Dorsolateral prefrontal cortex (tissue), 120 donors: ENCODE measurements at regions of chr17 and their contacts with region 1.

Region 1: DNA sequence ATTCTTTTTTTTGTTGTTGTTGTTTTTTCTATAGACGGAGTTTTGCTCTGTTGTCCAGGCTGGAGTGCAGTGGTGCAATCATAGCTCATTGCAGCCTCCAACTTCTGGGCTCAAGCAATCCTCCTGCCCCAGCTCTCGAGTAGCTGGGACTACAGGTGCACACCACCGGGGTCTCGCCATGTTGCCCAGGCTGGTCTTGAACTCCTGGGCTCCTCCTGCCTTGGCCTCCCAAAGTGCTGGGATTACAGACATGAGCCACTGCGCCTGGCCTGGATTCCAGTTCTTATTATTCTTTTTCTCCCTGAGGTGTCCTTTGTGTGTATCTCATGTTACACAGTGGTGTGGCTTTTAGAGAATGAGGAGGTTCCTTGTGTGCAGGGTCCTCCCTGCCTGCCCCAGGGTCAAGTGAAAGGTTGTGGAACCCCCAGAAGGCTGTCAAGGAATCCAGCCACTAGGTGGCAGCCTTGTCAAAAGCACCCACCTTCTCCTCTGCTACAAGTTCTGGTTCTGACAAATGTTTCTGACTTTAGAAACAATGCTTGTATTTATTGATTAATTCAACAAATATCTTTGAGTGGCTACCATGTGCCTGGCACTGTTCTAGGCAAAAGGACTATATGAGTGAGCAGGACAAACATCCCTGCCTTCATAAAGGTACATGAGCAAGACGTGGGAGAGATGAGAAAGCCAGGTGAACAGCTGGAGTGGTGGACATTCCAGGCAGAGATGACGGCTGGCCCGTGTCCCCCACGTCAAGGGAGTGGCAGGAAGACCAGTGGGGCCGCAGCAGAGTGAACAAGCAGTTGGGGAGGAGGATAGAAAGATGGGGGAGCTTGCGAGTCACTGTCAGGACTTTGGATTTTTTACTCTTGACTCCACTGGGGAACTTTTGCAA is 112.4 kb downstream of the SPECC1 start:
- DNase-seq: peak; percentile 43 to 89 (median 78)
- H3K4me3 ChIP-seq: peak overlapping the region in 51 of 59 donors; percentile 5 to 55 (median 35)
- H3K27ac ChIP-seq: peak overlapping the region in 58 of 59 donors; percentile 49 to 93 (median 86)
- H3K27me3 ChIP-seq: no peaks in the 10 kb centered on the region
- CTCF ChIP-seq: peak; percentile 85 to 98 (median 93)

Region 2: GRCh38 chr17:19744922-19745757 is 376.5 kb before region 1 on chr17:
- intact Hi-C with region 1: no loop called
- DNase-seq: peak; percentile 90 to 97 (median 94)
- H3K4me3 ChIP-seq: peak overlapping the region; percentile 45 to 76 (median 61)
- H3K27ac ChIP-seq: peak overlapping the region in 51 of 59 donors; percentile 7 to 84 (median 62)
- H3K27me3 ChIP-seq: no peaks in the 10 kb centered on the region
- CTCF ChIP-seq: peak; percentile 73 to 97 (median 92)

Region 3: DNA sequence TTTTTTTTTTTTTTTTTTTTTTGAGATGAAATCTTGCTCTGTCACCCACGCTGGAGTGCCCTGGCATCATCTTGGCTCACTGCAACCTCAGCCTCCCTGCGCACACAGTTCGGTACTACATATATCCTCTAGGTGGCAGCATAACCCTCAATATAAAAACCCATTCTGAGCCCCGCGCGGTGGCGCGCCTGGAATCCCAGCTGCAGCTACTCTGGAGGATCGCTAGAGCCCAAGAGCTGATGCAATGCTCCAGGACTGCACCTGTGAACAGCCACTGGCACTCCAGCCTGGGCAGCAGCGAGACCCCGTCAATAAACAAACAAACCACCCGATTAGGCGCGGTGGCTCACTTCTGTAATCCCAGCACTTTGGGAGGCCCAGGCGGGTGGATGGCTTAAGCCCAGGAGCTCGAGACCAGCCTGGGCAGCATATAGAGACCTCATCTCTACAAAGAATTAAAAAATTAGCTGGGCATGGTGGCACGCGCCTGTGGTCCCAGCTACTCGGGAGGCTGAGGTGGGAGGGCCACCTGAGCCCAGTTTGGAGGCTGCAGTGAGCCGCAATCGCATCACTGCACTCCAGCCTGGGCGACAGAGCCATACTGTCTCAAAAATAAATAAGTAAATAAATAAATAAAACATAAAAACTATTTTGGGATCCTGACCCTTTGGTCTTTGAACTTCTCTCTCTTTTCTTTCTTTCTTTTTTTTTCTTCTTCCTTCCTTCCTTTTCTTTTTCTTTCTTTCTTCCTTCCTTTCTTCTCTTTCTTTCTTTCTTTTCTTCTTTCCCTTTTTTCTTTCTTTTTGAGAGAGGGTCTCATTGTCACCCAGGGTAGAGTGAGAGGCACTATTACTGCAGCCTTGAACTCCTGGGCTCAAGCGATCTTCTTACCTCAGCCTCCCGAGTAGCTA is 128.5 kb before region 1 on chr17:
- intact Hi-C with region 1: loop called (anchors 1 to 2 kb)
- DNase-seq: peak; percentile 83 to 94 (median 90)
- H3K4me3 ChIP-seq: peak overlapping the region in 58 of 59 donors; percentile 23 to 65 (median 47)
- H3K27ac ChIP-seq: peak overlapping the region in 51 of 59 donors; percentile 2 to 86 (median 74)
- H3K27me3 ChIP-seq: no peaks in the 10 kb centered on the region
- CTCF ChIP-seq: peak; percentile 79 to 97 (median 91)

Region 4: GRCh38 chr17:20009302-20010098 is 112.1 kb before region 1 on chr17 and contains the start of gene SPECC1:
- intact Hi-C with region 1: loop called (anchors 2 to 5 kb)
- DNase-seq: peak in 8 of 10 donors; percentile 69 to 93 (median 82)
- H3K4me3 ChIP-seq: peak within 1 kb of the TSS; percentile 65 to 99 (median 88)
- H3K27ac ChIP-seq: peak within 1 kb of the TSS; percentile 74 to 98 (median 95)
- H3K27me3 ChIP-seq: no peaks in the 10 kb centered on the region
- CTCF ChIP-seq: peak in 48 of 56 donors; percentile 3 to 100 (median 96)
- total RNA-seq, gene SPECC1: 140 to 321 (median 197) TPM

Region 5: DNA sequence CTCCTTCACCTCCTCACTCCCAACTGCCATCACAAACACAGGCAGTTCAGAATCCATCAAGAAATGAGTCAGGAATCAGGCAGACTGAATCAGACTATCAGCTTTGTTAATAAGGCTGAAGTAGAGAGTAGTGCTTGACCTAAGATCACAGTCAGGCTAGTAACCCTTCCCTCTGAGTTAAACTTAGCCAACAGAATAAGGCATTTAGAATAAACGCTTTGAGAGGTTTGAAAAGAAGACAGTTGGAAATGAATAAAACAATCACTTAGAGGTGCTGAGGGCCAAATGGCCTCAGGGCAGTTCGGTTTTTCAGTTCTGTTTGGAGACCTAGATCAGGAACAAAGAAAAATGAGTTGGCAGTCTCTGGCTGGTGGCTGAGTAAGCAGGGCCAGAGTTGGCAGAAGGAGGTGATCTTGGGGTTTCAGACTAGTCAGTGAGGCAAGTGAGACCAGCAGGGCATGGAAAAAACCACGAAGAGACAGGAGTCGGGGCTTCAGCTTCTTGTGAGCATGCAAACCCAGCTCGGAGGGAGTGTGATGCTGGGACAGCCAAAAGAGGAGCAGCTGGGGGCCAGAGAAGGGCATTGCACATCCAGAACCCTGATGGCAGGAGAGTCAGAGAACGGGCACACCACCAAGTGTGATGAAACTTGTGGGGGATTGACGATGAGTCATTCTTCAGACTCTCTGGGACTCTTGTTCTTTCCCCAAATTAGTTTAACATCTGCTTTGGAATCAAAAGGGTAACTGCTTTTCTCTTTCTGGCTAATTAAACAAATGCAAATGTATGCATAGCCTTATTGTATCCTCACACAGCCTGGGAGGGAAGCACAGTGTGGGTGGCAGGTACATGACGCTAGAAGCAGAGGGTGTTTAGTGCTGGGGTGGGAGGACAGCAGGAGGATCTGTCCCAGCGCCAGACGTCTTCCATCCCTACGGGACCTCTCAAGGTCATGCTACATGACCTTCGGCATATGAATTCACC is 57.6 kb before region 1 on chr17:
- intact Hi-C with region 1: no loop called
- DNase-seq: peak in 9 of 10 donors; percentile 43 to 89 (median 70)
- H3K4me3 ChIP-seq: peak overlapping the region in 31 of 59 donors; percentile 1 to 44 (median 22)
- H3K27ac ChIP-seq: peak overlapping the region; percentile 39 to 92 (median 82)
- H3K27me3 ChIP-seq: no peaks in the 10 kb centered on the region
- CTCF ChIP-seq: peak in 2 of 56 donors; percentile 6 to 17

Region 6: DNA sequence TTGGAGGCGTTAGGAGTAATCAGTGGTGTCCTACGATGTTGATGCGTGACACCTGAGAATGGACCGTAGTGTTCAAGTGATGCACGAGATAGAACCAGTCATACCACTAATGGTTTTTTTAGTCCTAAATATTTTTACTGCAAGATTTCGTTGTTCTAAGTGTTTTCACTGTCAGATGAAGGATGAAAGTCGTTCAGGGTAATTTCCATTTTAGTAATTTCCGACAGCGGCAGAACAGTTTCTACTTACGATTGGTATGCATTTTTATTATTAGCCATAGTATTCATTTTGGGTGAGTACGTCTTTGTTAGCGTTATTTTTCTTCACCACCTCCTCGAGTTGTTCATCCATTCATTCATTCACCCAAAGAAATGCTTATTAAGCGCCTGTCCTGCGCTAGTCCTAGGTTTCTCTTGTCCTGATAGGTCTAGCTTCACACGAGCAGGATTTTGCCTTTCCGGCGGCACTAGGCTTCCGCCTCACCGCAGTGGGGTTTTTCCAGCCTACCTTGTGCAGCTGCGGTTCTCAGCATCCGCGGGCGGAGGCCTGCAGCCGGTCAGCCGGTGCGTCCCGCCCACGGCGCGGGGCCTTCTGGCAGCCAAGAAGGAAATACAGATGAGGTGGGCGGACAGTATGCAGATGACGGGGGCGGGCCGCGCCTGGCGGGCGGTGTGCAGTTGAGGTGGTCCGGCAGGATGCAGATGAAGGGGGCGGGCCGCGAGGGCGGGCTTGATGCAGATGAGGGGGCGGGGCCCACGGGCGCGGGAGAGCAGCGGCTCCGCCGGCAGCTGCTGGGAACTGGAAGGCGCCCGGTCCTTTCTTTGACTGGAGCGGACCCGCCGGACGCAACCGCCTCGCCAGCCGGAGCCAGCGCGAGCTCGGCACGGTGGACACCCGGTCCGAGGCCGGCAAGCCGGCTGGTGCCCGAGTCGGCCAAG is 33.9 kb after region 1 on chr17:
- intact Hi-C with region 1: loop called in 1 of 2 experiments (anchors 2 kb)
- DNase-seq: peak; percentile 77 to 98 (median 96)
- H3K4me3 ChIP-seq: peak overlapping the region; percentile 63 to 92 (median 81)
- H3K27ac ChIP-seq: peak overlapping the region in 57 of 59 donors; percentile 6 to 91 (median 81)
- H3K27me3 ChIP-seq: no peaks in the 10 kb centered on the region
- CTCF ChIP-seq: peak in 22 of 56 donors; percentile 7 to 51 (median 36)

Region 7: GRCh38 chr17:20189302-20189701 is 67.7 kb after region 1 on chr17:
- intact Hi-C with region 1: loop called (anchors 2 to 5 kb)
- DNase-seq: peak; percentile 23 to 94 (median 91)
- H3K4me3 ChIP-seq: peak overlapping the region in 28 of 59 donors; percentile 0 to 45 (median 20)
- H3K27ac ChIP-seq: peak overlapping the region; percentile 84 to 99 (median 95)
- H3K27me3 ChIP-seq: no peaks in the 10 kb centered on the region
- CTCF ChIP-seq: peak in 9 of 56 donors; percentile 4 to 30 (median 12)

Region 8: GRCh38 chr17:20226814-20227482 is 105.3 kb after region 1 on chr17:
- intact Hi-C with region 1: loop called (anchors 1 kb)
- DNase-seq: peak; percentile 70 to 94 (median 92)
- H3K4me3 ChIP-seq: peak overlapping the region in 9 of 59 donors; percentile 2 to 35 (median 16)
- H3K27ac ChIP-seq: peak overlapping the region; percentile 2 to 95 (median 84)
- H3K27me3 ChIP-seq: no peaks in the 10 kb centered on the region
- CTCF ChIP-seq: peak; percentile 58 to 98 (median 93)

Region 9: DNA sequence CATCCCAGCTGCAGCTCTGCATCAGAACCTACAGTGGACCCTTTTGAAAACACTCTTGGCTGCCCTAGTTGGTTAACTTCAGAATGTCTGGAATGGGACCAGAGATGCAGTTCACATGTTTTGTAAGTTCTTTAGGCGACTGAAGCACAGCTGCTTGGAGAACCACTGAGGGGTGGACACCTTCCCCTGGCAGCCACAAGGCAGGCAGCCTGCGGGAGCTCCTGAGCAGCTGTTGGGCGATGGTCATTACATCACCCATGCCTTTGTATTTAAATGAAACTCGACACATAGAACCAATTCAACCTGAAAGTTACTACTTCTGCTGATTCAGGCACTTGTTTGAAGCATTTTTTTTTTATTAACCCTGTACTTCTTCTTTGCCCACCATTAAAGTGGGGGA is 194.2 kb after region 1 on chr17:
- intact Hi-C with region 1: loop called (anchors 5 kb)
- DNase-seq: no peak
- H3K4me3 ChIP-seq: no peak overlapping the region
- H3K27ac ChIP-seq: peak overlapping the region in 34 of 59 donors; percentile 1 to 66 (median 38)
- H3K27me3 ChIP-seq: no peaks in the 10 kb centered on the region
- CTCF ChIP-seq: no peak